ENCODE measurements at regions of chr12 and their contacts with region 1.

Region 1: GRCh38 chr12:43805860-43806736 is at the start of gene TWF1:
- DNase-seq: peak; percentile 83 to 89
- H3K4me3 ChIP-seq: peak within 1 kb of the TSS; percentile 81 to 91
- H3K27ac ChIP-seq: peak within 1 kb of the TSS; percentile 89 to 97
- H3K4me1 ChIP-seq: peaks cover 0 to 32% (median 11%) of the 10 kb centered on the region in 4 donors
- H3K27me3 ChIP-seq: no peaks in the 10 kb centered on the region
- CTCF ChIP-seq: peak in 1 of 2 experiments; percentile 16

Region 2: GRCh38 chr12:43758728-43759563 is 47.2 kb before region 1 on chr12 and contains the starts of genes IRAK4 and PUS7L:
- intact Hi-C with region 1: loop called (anchors 10 kb)
- DNase-seq: peak; percentile 95 to 96
- H3K4me3 ChIP-seq: peak within 1 kb of the TSS; percentile 68 to 90
- H3K27ac ChIP-seq: peak within 1 kb of the TSS; percentile 79 to 89
- H3K4me1 ChIP-seq: peaks cover 0 to 26% (median 19%) of the 10 kb centered on the region in 4 donors
- H3K27me3 ChIP-seq: no peaks in the 10 kb centered on the region
- CTCF ChIP-seq: peak; percentile 20 to 42

Region 3: DNA sequence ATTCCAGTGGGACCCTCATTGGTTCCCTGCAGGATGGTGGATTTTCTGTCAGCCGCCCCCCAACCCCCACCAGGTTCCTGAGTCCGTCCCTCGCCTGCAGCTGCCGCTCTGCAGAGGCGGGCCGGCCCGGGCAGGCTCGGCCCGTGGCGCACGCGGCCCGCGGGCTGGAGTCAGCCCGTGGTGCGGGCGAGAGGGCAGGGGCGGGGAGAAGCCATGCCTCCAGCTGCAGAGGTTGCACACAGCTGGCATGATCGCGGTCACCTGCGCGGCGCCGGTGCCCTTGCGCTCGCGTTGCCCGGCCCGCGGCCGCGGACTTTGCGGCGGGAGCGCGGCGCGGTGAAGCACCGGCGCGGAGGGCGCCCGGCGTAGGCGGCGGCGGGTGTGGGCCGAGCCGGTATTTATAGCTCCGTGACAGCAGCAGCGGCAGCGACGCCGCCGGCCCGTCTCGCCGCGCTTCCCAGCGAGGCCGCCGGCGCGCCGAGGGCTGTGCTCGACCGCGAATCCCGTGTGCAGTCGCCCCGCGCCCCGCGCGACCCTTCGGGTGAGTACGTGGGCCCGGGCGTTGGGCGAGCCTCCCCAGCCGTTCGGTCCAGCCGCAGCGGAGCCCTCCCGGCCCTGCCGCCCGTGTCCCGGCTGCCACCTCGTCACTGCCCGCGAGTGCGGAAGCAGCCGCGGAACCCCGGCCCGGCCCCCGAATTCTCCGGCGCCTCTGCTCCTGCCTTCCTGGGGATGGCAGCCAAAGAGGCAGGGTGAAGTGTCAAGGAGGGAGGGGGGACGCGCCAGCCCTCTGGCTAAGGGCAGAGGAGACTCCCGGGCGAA is 29.8 kb after region 1 on chr12 and contains the start of gene TMEM117:
- intact Hi-C with region 1: loop called (anchors 2 kb)
- DNase-seq: peak; percentile 69 to 84
- H3K4me3 ChIP-seq: peak within 1 kb of the TSS; percentile 69 to 80
- H3K27ac ChIP-seq: peak within 1 kb of the TSS; percentile 86 to 94
- H3K4me1 ChIP-seq: peaks cover 0 to 23% (median 10%) of the 10 kb centered on the region in 4 donors
- H3K27me3 ChIP-seq: no peaks in the 10 kb centered on the region
- CTCF ChIP-seq: peak in 1 of 2 experiments; percentile 16

Region 4: DNA sequence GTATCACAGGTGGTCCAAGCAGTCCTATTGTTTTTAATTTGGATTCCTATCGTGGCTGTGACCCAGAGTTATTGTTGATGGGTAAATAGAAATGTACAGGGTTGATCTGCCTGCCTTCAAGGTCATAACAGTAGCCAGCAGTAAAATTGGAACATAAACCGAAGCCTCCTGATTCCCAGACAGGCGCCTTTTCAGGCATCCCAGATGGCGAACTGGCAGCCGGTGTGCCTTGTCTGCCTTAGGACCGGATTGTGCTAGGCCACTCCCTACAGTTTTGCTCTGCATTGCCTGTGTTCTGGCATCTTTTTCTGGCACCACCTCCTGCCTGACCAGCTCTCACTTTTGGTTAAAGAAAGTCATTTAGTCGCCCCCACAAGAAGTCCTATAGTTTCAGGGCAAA is 52.0 kb after region 1 on chr12:
- intact Hi-C with region 1: no loop called
- DNase-seq: no peak
- H3K4me3 ChIP-seq: no peak overlapping the region
- H3K27ac ChIP-seq: no peak overlapping the region
- H3K4me1 ChIP-seq: no peaks in the 10 kb centered on the region
- H3K27me3 ChIP-seq: no peaks in the 10 kb centered on the region
- CTCF ChIP-seq: no peak

Measured in tibial artery (tissue), 4 donors.